ENCODE measurements at regions of chr18 and their contacts with region 1.

Region 1: DNA sequence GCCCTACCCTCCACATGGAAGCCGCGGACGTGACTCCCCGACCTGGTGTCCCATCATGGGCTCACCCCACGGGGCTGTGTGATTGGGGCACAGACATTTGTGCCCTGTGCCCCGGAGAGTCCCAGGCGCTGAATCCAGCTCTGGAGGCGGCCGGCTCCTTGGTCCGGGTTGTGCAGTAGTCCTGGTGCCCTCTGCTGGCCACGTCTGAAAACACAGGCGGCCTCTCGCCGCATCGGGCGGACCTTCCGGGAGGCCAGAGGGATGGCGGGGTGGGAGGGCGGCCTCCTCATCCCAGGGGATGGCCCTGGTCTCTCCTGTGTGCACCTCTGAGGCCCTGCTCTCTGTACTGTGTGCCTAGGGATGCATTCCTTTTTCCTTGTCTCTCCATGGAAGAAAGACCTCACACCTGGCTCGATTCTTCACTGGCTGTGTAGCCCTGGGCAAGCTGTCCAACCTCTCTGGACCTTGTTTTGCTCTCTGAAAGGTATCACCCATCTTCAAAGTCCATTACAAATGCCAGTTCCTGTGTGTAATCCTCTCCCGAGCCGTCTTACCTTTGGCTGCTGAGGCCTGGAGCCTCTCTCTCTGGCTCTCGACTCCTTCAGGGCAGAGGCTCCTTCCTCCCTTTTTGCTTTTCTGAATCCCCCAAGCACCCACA is 27.6 kb downstream of the CELF4 start:
- DNase-seq: peak; percentile 65
- H3K4me3 Mint-ChIP-seq: no peak overlapping the region
- H3K27ac Mint-ChIP-seq: no peak overlapping the region
- H3K4me1 Mint-ChIP-seq: peaks cover 4% of the 10 kb centered on the region
- H3K27me3 Mint-ChIP-seq: peaks cover 25% of the 10 kb centered on the region

Region 2: DNA sequence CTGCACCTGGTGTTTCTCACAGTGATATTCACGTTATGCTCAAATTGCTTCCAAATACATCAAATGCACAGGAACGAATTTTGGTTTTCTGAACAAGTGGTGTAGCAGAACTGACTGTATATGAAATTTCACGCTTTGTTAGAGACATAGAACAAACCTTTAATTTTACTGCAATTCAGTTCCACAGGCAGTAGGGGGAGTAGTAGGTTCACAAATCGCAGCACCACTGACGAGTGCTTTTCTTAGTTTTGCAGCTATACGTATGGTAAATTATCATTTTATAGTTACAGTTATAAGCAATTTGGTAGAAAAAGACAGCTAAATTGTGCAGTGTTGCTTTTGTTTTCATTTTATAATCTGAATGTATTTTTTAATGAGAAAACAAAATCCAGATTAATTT is 595.7 kb before region 1 on chr18:
- CTCF ChIA-PET with region 1: no interaction called
- intact Hi-C with region 1: loop called (anchors 5 kb)
- DNase-seq: peak; percentile 22
- H3K4me3 Mint-ChIP-seq: no peak overlapping the region
- H3K27ac Mint-ChIP-seq: no peak overlapping the region
- H3K4me1 Mint-ChIP-seq: no peaks in the 10 kb centered on the region
- H3K27me3 Mint-ChIP-seq: no peaks in the 10 kb centered on the region

Region 3: DNA sequence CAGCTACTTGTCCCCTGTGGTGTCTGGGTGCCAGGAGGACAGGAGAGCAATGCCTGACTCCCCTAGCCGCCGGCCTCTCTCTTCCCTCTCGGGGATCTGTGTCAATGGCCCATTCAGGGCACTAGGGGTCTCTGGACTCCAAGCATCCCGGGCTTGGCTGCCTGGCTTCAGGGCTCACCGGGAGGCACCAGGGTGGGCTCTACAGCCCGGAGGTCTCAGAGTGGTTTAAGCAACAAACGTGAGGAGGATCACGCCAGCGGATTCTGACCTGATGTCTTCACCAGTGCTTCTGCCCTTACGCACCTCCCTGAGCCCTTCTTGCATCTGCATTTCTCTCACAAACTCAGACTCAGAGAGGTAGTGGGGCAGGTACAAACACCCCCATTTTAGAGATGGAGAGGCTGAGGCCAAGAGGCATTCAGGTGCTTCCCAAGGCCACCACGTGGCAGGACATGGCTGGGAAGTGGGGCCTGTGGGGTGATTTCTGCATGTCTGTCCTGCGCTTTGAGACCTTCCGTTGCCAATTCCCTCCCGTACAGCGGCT is 215.4 kb before region 1 on chr18:
- CTCF ChIA-PET with region 1: no interaction called
- intact Hi-C with region 1: loop called (anchors 5 kb)
- DNase-seq: peak; percentile 38
- H3K4me3 Mint-ChIP-seq: no peak overlapping the region
- H3K27ac Mint-ChIP-seq: no peak overlapping the region
- H3K4me1 Mint-ChIP-seq: no peaks in the 10 kb centered on the region
- H3K27me3 Mint-ChIP-seq: peaks cover 4% of the 10 kb centered on the region

Region 4: GRCh38 chr18:37385846-37386778 is 151.9 kb before region 1 on chr18:
- CTCF ChIA-PET with region 1: interaction called, 3 read pairs
- intact Hi-C with region 1: loop called (anchors 1 kb)
- DNase-seq: no peak
- H3K4me3 Mint-ChIP-seq: no peak overlapping the region
- H3K27ac Mint-ChIP-seq: no peak overlapping the region
- H3K4me1 Mint-ChIP-seq: no peaks in the 10 kb centered on the region
- H3K27me3 Mint-ChIP-seq: peaks cover 5% of the 10 kb centered on the region

Region 5: DNA sequence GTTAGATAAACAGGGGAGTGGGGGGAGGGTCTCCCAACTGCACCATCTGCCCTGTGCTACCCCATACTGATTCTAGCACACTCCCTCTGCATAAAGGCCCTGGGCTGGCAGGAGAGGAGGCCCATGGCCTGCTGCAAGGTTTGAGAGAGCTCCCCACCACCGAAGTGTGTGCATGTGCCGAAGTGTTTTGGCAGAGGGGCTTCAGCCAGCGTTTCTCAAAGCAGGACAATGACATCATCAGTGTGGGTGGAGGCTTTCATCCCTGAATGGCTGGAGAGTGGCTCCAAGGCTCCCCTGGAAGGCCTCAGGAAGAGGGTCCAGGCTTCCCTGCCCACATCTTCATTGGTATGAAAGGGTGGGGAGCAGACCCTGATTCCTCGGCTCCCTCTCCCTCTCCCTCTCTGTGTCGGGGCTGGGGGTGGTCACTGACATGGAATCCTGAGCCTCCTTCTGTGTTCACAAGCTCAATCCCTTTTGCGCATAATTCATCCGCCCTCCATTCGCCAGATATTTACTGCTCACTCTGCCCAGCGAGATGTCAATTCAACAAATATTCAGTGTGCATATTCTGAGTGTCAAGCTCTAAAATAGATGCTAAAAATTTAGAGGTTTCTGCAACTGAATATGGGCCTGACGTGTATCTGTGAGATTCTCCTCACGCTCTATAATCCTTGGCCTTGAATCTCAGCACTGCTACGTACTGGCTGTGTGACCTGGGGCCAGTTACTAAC is 94.5 kb before region 1 on chr18:
- CTCF ChIA-PET with region 1: no interaction called
- intact Hi-C with region 1: loop called (anchors 1 kb)
- DNase-seq: no peak
- H3K4me3 Mint-ChIP-seq: no peak overlapping the region
- H3K27ac Mint-ChIP-seq: no peak overlapping the region
- H3K4me1 Mint-ChIP-seq: no peaks in the 10 kb centered on the region
- H3K27me3 Mint-ChIP-seq: peaks cover 6% of the 10 kb centered on the region

Region 6: DNA sequence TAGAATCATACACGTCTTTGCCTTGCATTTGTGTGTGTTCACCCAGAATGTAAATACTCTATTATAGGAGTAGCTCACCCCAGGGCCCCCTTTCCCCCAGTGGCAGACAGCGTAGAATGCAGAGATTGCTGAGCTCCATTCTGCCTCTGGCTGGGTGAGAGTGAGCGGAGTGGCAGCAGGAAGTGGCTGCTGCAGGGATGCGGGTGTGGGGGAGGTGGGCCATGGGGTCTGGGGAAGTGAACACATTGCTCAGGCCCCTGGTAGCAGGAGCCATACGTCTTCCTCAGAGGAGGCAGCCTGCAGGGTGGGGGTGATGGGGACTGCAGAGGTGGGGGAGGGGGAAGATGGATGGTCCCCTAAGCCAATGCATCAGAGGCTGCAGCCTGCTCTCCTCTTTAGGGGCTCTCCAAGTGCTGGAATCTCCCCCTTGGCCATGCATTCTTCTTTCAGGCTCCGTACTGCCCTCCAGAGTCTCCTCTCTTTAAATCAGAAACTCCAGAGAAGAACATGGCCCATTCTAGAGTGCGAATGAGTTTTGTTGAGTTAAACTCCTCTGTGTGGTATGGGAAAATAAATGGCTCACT is 44.6 kb before region 1 on chr18:
- CTCF ChIA-PET with region 1: no interaction called
- intact Hi-C with region 1: no loop called
- DNase-seq: no peak
- H3K4me3 Mint-ChIP-seq: no peak overlapping the region
- H3K27ac Mint-ChIP-seq: no peak overlapping the region
- H3K4me1 Mint-ChIP-seq: no peaks in the 10 kb centered on the region
- H3K27me3 Mint-ChIP-seq: peaks cover 23% of the 10 kb centered on the region

Region 7: DNA sequence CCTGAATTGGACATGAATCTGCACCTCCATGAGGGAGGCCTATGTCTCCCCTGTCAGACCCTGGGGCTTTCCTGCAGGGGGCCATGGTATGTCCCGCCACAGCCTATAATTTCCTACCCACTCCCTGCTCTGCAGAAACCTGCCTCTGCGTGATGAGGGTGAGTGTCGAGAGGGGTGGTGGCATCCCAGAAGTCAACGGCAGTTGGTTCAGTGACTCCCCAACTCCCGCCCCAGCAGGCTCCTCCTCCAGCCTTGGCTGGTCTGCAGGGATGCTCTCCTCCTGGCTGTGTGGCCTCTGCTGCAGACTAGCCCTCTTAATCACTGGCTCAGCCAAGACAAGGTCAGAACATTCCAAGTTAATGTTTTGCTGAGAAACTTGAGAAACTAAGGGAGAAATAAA is 14.3 kb after region 1 on chr18:
- CTCF ChIA-PET with region 1: no interaction called
- intact Hi-C with region 1: no loop called
- DNase-seq: no peak
- H3K4me3 Mint-ChIP-seq: no peak overlapping the region
- H3K27ac Mint-ChIP-seq: no peak overlapping the region
- H3K4me1 Mint-ChIP-seq: no peaks in the 10 kb centered on the region
- H3K27me3 Mint-ChIP-seq: peaks cover 3% of the 10 kb centered on the region

Measured in activated naive CD4-positive, alpha-beta T cell treated with anti-CD3 and anti-CD28 coated beads for 36 hours (primary cell).